ENCODE measurements at regions of chr5 and their contacts with region 1.

Region 1: GRCh38 chr5:119267958-119268386 is 87.8 kb upstream of the TNFAIP8 start:
- DNase-seq: peak; percentile 59 to 89 (median 78)
- ATAC-seq: peak; percentile 58 to 71
- H3K4me3 Mint-ChIP-seq: peak overlapping the region; percentile 96 to 100 (median 100)
- H3K27ac Mint-ChIP-seq: peak overlapping the region; percentile 93 to 98 (median 95)
- H3K4me1 Mint-ChIP-seq: peaks cover 41 to 73% (median 65%) of the 10 kb centered on the region in 4 donors
- H3K27me3 Mint-ChIP-seq: no peaks in the 10 kb centered on the region

Region 2: DNA sequence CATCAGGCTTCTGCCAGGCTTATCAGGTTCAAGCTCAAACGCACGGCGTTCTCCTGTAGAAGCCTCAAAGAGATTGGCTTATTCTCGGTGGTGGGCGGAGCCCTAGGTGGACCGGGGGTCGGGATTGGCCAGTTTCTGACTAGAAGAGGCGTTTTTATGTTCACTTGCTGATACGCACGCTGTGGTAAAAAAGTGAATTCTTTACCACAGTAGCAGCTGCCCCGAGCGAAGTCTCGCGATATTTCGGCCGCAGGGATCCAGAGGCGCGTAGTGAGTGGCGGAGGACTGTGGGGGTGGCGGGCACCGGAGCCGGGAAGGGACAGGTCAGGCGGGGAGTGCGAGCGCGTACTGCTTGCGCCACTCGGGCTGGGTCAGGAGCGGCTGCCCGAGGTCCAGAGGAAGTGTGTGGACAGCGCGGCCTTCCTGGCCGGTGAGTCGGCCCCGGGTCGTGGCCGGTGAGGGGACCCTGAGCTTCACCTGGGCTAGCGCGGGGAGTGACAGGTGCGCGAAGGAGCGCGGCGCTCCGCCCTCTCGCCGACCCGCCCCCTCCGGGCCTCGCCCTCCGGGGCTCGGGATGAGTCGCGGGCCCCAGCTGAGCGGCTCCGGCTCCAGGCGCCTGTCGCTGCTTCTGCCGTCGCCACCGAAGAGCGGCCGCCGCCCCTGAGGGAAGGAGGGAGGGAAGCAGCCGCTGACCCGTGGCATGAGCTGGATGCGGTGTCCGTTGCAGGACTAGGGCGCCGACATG is 197.0 kb before region 1 on chr5 and contains the start of gene DMXL1:
- POLR2A ChIA-PET with region 1: interaction called, 25 read pairs
- DNase-seq: peak; percentile 96 to 100 (median 98)
- ATAC-seq: peak; percentile 84 to 85
- H3K4me3 Mint-ChIP-seq: peak within 1 kb of the TSS; percentile 97 to 100 (median 100)
- H3K27ac Mint-ChIP-seq: peak within 1 kb of the TSS; percentile 97 to 100 (median 98)
- H3K4me1 Mint-ChIP-seq: peaks cover 12 to 49% (median 35%) of the 10 kb centered on the region in 4 donors
- H3K27me3 Mint-ChIP-seq: peaks cover 0 to 2% (median 0%) of the 10 kb centered on the region in 5 donors
- polyA plus RNA-seq, gene DMXL1: 15.0 to 19.9 (median 18.4) TPM

Region 3: DNA sequence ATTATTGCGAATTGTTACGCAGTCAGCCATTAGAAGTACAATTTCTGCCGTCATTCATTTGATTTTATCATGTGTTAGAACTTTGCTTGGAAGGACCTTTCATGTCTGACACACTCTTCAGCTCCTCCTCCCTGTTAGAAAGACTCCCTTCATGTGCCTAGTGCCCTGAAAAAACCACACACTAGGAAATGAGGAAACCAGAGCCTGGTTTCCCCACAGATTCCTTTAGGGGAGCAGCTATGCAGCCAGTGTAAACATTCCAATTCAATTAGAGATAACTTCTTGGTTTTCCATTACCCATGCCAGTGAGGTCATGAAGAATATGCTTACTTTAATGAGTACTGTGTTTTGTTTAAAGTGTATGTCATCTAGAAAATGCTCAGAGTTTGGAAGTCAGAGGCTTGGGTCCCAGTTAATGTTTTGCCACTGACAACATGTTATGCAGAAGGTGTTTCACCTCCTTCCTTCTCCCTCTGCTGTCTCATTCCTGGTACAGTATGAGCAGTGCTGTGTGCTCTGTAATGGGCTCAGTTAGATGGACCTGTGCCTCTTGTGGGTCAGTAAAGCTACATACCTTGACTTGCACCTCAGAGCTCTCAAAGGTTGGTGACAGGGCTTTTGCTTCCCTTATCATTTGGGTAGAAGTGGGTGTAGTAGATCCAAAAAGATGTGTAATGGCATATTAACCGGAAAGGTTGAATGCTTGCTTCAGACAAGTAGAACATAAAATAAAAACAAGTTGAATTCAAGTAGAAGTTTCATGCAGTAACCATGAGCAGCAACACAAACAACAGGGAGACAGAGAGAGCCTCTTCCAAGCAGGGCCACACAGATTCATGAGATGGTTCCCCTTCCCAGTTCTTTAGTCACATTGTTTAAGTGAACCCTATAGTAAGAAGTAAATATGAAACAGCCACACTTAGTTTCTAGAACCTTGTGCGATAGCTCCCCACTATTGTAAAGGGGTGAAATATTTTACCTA is 35.2 kb after region 1 on chr5:
- POLR2A ChIA-PET with region 1: interaction called, 42 read pairs
- DNase-seq: peak in 1 of 10 donors; percentile 34
- ATAC-seq: peak; percentile 52 to 71
- H3K4me3 Mint-ChIP-seq: peak overlapping the region; percentile 31 to 89 (median 72)
- H3K27ac Mint-ChIP-seq: peak overlapping the region; percentile 85 to 100 (median 97)
- H3K4me1 Mint-ChIP-seq: peaks cover 44 to 95% (median 84%) of the 10 kb centered on the region in 4 donors
- H3K27me3 Mint-ChIP-seq: no peaks in the 10 kb centered on the region

Region 4: GRCh38 chr5:119309326-119309725 is 41.4 kb after region 1 on chr5:
- POLR2A ChIA-PET with region 1: interaction called, 42 read pairs
- DNase-seq: no peak
- ATAC-seq: peak; percentile 20 to 55
- H3K4me3 Mint-ChIP-seq: peak overlapping the region; percentile 71 to 93 (median 84)
- H3K27ac Mint-ChIP-seq: peak overlapping the region; percentile 95 to 100 (median 98)
- H3K4me1 Mint-ChIP-seq: peaks cover 37 to 95% (median 89%) of the 10 kb centered on the region in 4 donors
- H3K27me3 Mint-ChIP-seq: no peaks in the 10 kb centered on the region

Region 5: GRCh38 chr5:119315516-119315949 is 47.6 kb after region 1 on chr5:
- POLR2A ChIA-PET with region 1: interaction called, 42 read pairs
- DNase-seq: peak in 8 of 10 donors; percentile 43 to 81 (median 64)
- ATAC-seq: peak; percentile 71 to 87
- H3K4me3 Mint-ChIP-seq: peak overlapping the region; percentile 12 to 80 (median 54)
- H3K27ac Mint-ChIP-seq: peak overlapping the region; percentile 60 to 99 (median 94)
- H3K4me1 Mint-ChIP-seq: peaks cover 39 to 94% (median 91%) of the 10 kb centered on the region in 4 donors
- H3K27me3 Mint-ChIP-seq: no peaks in the 10 kb centered on the region

Region 6: GRCh38 chr5:119322948-119323537 is 55.1 kb after region 1 on chr5:
- POLR2A ChIA-PET with region 1: interaction called, 11 read pairs
- DNase-seq: no peak
- ATAC-seq: no peak
- H3K4me3 Mint-ChIP-seq: peak overlapping the region in 9 of 10 donors; percentile 9 to 81 (median 54)
- H3K27ac Mint-ChIP-seq: peak overlapping the region; percentile 81 to 96 (median 93)
- H3K4me1 Mint-ChIP-seq: peaks cover 64 to 96% (median 90%) of the 10 kb centered on the region in 4 donors
- H3K27me3 Mint-ChIP-seq: no peaks in the 10 kb centered on the region